Naive thymus-derived CD4-positive, alpha-beta T cell (primary cell): ENCODE measurements at regions of chr20 and their contacts with region 1.

Region 1: GRCh38 chr20:44475694-44476560 is at the start of gene TTPAL:
- DNase-seq: peak; percentile 83 to 95 (median 89)
- ATAC-seq: peak; percentile 98
- H3K4me3 ChIP-seq: peak within 1 kb of the TSS; percentile 65
- H3K4me3 Mint-ChIP-seq: peak within 1 kb of the TSS; percentile 87 to 96 (median 91)
- H3K27ac ChIP-seq: peak within 1 kb of the TSS; percentile 97
- H3K27ac Mint-ChIP-seq: peak within 1 kb of the TSS; percentile 86 to 97 (median 94)
- H3K4me1 ChIP-seq: peaks cover 12 to 17% of the 10 kb centered on the region in 2 donors
- H3K4me1 Mint-ChIP-seq: peaks cover 14 to 43% (median 31%) of the 10 kb centered on the region in 7 donors
- H3K27me3 ChIP-seq: no peaks in the 10 kb centered on the region
- H3K27me3 Mint-ChIP-seq: no peaks in the 10 kb centered on the region
- total RNA-seq, gene TTPAL: 12.0 to 20.7 (median 17.0) TPM

Region 2: GRCh38 chr20:44678242-44678641 is 202.3 kb after region 1 on chr20:
- CTCF ChIA-PET with region 1: no interaction called
- POLR2A ChIA-PET with region 1: no interaction called
- intact Hi-C with region 1: loop called in 1 of 2 experiments (anchors 5 kb)
- DNase-seq: no peak
- ATAC-seq: no peak
- H3K4me3 ChIP-seq: no peak overlapping the region
- H3K4me3 Mint-ChIP-seq: no peak overlapping the region
- H3K27ac ChIP-seq: no peak overlapping the region
- H3K27ac Mint-ChIP-seq: no peak overlapping the region
- H3K4me1 ChIP-seq: no peaks in the 10 kb centered on the region
- H3K4me1 Mint-ChIP-seq: no peaks in the 10 kb centered on the region
- H3K27me3 ChIP-seq: no peaks in the 10 kb centered on the region
- H3K27me3 Mint-ChIP-seq: no peaks in the 10 kb centered on the region

Region 3: DNA sequence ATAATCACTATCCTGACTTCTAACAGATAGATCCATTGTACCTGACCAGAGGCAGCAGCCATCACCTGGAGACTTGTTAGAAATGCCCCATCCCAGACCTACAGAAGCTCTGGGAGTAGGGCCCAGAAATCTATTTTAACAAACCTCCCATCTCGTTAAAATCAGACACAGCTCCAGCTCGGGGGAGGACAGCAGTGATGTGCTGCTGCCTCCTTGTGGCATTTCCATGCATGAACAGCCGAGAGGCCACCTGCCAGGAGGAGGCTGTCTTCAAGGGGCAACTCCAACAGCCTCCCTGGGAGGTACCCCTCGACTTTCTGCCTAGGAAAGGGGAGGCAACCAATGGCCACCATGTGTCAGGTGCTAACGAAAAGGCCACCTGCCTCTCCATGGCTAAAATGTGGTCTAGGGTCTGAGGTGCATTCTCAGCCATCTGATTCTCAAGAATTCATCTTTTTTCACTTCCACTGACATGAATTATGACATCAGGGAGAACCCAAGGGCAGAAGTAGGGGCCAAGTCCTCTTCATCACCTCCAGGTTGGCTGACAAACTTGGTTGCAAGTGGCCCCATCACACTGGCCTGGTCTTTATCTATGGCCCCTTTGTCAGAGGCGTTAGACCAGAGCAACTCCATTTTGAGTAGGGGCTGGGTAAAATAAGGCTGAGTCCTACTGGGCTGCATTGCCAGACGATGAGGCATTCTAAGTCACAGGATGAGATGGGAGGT is 257.6 kb after region 1 on chr20:
- CTCF ChIA-PET with region 1: no interaction called
- POLR2A ChIA-PET with region 1: interaction called, 3 read pairs
- intact Hi-C with region 1: loop called in 1 of 2 experiments (anchors 2 kb)
- DNase-seq: peak; percentile 34 to 73 (median 57)
- ATAC-seq: peak; percentile 77
- H3K4me3 ChIP-seq: no peak overlapping the region
- H3K4me3 Mint-ChIP-seq: no peak overlapping the region
- H3K27ac ChIP-seq: no peak overlapping the region
- H3K27ac Mint-ChIP-seq: peak overlapping the region in 1 of 9 donors; percentile 32
- H3K4me1 ChIP-seq: no peaks in the 10 kb centered on the region
- H3K4me1 Mint-ChIP-seq: peaks cover 11 to 23% (median 20%) of the 10 kb centered on the region in 7 donors
- H3K27me3 ChIP-seq: no peaks in the 10 kb centered on the region
- H3K27me3 Mint-ChIP-seq: no peaks in the 10 kb centered on the region